ENCODE measurements at regions of chr19 and their contacts with region 1.

Region 1: DNA sequence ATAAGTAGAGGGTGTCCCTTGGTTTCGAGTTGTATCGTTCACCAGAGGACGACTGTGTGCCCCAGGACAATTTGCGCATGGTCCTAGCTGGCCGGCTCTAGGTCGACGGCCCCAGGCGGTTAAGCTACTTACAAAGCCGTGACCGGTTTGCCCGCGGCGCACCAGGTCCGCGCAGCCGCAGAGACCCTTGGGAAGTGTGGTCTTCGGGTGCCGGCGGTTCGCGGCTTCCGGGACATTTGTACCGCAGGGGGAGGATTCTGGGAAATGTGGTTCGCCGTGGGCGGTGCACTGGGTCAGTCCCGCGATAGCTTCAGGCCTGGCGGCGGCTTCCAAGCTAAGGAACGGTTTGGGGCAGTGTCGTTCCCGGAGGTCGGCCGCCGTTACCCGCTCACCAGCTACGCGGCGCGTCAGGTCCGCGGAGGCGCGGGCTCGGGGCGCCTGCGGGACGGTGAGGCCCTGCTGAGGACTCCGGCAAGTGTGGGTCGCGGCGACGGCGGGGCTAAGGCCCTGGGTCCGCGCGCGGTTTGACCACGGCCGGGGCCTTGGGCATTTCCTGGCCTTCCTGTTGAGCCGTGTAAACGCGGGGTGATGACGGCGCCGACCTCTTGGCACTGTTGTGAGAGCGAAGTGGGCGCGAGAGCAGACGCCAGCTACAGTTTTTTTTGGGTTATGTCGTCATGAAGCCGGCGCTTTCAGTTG is at the start of gene ZNF302:
- DNase-seq: peak; percentile 94 to 97 (median 96)
- H3K4me3 ChIP-seq: peak within 1 kb of the TSS; percentile 74 to 99 (median 92)
- H3K27ac ChIP-seq: peak within 1 kb of the TSS; percentile 35 to 100 (median 97)
- H3K27me3 ChIP-seq: no peaks in the 10 kb centered on the region
- CTCF ChIP-seq: peak in 19 of 56 donors; percentile 2 to 57 (median 29)
- total RNA-seq, gene ZNF302: 42.2 to 67.0 (median 53.7) TPM

Region 2: GRCh38 chr19:34772697-34773554 is 95.4 kb after region 1 on chr19 and contains the start of gene ZNF599:
- intact Hi-C with region 1: loop called in 1 of 2 experiments (anchors 1 kb)
- DNase-seq: peak; percentile 77 to 94 (median 82)
- H3K4me3 ChIP-seq: peak within 1 kb of the TSS; percentile 62 to 97 (median 86)
- H3K27ac ChIP-seq: peak within 1 kb of the TSS in 40 of 59 donors; percentile 15 to 84 (median 61)
- H3K27me3 ChIP-seq: peaks cover 0 to 16% (median 0%) of the 10 kb centered on the region in 45 donors
- CTCF ChIP-seq: peak in 26 of 56 donors; percentile 12 to 62 (median 28)
- total RNA-seq, gene ZNF599: 2.2 to 10.1 (median 5.5) TPM

Measured in dorsolateral prefrontal cortex (tissue), 120 donors.